IMR-90 (cell line): ENCODE measurements at regions of chr9 and their contacts with region 1.

Region 1: DNA sequence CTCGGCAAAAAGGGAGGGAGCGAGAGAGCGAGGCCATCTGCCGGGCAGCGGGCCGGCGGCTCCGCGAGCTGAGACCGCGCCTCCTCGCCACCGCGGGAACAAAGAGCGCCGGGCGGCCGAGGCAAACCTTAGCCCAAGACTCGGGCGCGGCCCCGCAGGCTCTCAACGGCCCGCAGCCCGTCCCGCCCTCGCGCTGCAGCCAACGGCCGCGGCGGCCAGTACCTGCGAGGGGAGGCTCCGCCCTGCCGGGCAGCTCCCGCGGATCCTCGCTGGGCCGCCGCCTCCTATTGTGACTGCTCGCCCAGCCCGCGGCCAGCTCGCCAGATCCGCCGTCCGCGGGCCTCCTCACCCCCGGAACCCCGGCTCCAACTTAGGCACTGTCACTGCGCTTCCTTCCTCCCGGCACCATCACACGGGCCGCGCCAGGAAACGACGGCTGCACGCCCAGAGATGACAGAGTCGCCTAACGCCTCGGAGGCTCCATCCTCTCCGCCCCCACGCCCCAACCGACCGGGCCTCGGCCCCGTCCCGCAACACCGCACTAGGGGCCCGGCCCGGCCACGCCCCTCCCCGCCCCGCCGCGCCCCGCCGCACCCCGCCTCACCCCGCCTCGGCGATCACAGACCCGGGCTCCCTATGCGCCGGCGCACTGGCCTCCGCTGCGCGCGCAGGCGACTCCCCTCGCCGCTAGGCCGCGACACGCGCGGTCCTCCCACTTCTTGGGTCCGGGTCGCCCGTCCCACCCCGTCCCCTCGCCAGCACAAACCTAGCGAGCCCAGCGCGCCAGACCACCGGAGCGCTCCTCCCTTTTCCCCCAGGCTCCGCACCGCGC is 479 bp upstream of the RNF38 start:
- DNase-seq: peak; percentile 75
- ATAC-seq: peak; percentile 91
- H3K4me3 ChIP-seq: peak overlapping the region; percentile 65
- H3K27ac ChIP-seq: peak overlapping the region; percentile 97
- H3K4me1 ChIP-seq: peaks cover 2% of the 10 kb centered on the region; the same call in 1 of the 2 replicates
- H3K27me3 ChIP-seq: no peaks in the 10 kb centered on the region
- CTCF ChIP-seq: no peak
- POLR2A ChIP-seq: no peak; the same call in 1 of the 2 replicates
- RAD21 ChIP-seq: no peak

Region 2: GRCh38 chr9:36532353-36532752 is 131.8 kb after region 1 on chr9:
- CTCF ChIA-PET with region 1: no interaction called
- POLR2A ChIA-PET with region 1: no interaction called
- dilution Hi-C with region 1: no loop called
- in situ Hi-C with region 1: no loop called
- intact Hi-C with region 1: no loop called
- DNase-seq: no peak
- ATAC-seq: no peak
- H3K4me3 ChIP-seq: no peak overlapping the region
- H3K27ac ChIP-seq: no peak overlapping the region
- H3K4me1 ChIP-seq: no peaks in the 10 kb centered on the region
- H3K27me3 ChIP-seq: peaks cover 12% of the 10 kb centered on the region
- CTCF ChIP-seq: no peak
- POLR2A ChIP-seq: no peak
- RAD21 ChIP-seq: no peak

Region 3: GRCh38 chr9:36855448-36856315 is 455.1 kb after region 1 on chr9:
- CTCF ChIA-PET with region 1: no interaction called
- POLR2A ChIA-PET with region 1: no interaction called
- dilution Hi-C with region 1: no loop called
- in situ Hi-C with region 1: no loop called
- intact Hi-C with region 1: loop called (anchors 10 kb)
- DNase-seq: no peak
- ATAC-seq: peak; percentile 24; the same call in 1 of the 2 replicates
- H3K4me3 ChIP-seq: no peak overlapping the region
- H3K27ac ChIP-seq: no peak overlapping the region
- H3K4me1 ChIP-seq: no peaks in the 10 kb centered on the region
- H3K27me3 ChIP-seq: peaks cover 61% of the 10 kb centered on the region
- CTCF ChIP-seq: 0 out of 2 replicates have a peak, but pooled peaks have one; percentile 11
- POLR2A ChIP-seq: no peak
- RAD21 ChIP-seq: no peak